PC-9 (cell line): ENCODE measurements at regions of chr14 and their contacts with region 1.

Region 1: DNA sequence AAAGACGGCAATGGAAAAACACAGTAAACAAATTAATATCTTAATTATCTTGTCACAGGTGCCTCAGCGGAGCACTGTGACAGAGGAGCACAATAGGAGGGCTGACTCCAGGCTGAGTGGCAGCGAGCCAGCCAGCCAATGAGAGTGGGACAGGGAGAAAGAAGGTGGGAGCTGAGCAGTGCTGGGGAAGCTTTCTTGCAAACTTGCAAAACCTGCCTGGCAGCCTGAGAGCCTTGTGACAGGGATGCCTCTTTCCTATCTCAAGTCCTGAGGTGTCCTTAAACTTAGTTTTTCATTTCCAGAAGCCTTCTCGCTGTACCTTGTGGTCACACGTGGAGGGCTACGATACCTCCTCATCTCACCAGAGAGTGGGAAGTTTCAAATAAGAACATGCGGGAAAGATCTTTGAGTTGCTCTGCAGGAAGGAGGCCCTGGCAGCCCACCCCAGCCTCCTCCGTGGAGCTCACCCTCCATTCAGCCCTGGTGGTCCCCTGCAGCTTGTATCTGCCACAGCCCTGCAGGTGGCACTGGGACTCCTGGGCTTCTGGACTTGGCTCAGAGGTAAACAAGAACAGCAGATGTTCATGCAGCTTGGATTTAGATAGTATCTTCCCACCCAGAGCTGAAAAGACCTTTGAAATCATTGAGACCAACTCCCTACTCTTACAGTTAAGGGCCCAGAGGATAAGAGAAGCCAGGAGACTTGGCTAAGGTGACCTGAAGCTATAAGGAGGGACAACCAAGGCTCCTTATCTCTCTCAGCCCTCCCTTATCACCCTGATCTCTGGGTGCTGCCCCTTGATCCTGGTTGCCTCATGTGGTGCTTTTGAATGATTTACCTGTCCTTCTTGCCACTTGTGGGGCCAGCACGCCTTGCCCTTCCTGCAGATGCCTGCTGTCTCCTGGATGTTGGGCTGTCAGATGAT is 153.5 kb upstream of the MAX start:
- DNase-seq: peak; percentile 92
- H3K4me3 ChIP-seq: peak overlapping the region; percentile 47; the same call in 1 of the 2 replicates
- H3K27ac ChIP-seq: peak overlapping the region; percentile 98
- H3K4me1 ChIP-seq: peaks cover 86% of the 10 kb centered on the region
- H3K27me3 ChIP-seq: no peaks in the 10 kb centered on the region
- CTCF ChIP-seq: peak; percentile 38; the same call in 1 of the 2 replicates

Region 2: GRCh38 chr14:64971943-64972791 is 283.6 kb before region 1 on chr14 and contains the start of gene RAB15:
- CTCF ChIA-PET with region 1: no interaction called
- POLR2A ChIA-PET with region 1: no interaction called
- intact Hi-C with region 1: no loop called
- DNase-seq: peak in 1 of 2 experiments; percentile 42
- H3K4me3 ChIP-seq: peak within 1 kb of the TSS; percentile 83
- H3K27ac ChIP-seq: peak within 1 kb of the TSS; percentile 79
- H3K4me1 ChIP-seq: peaks cover 45% of the 10 kb centered on the region
- H3K27me3 ChIP-seq: no peaks in the 10 kb centered on the region
- CTCF ChIP-seq: no peak
- total RNA-seq, gene RAB15: 52.9 and 74.9 TPM in 2 replicates

Region 3: DNA sequence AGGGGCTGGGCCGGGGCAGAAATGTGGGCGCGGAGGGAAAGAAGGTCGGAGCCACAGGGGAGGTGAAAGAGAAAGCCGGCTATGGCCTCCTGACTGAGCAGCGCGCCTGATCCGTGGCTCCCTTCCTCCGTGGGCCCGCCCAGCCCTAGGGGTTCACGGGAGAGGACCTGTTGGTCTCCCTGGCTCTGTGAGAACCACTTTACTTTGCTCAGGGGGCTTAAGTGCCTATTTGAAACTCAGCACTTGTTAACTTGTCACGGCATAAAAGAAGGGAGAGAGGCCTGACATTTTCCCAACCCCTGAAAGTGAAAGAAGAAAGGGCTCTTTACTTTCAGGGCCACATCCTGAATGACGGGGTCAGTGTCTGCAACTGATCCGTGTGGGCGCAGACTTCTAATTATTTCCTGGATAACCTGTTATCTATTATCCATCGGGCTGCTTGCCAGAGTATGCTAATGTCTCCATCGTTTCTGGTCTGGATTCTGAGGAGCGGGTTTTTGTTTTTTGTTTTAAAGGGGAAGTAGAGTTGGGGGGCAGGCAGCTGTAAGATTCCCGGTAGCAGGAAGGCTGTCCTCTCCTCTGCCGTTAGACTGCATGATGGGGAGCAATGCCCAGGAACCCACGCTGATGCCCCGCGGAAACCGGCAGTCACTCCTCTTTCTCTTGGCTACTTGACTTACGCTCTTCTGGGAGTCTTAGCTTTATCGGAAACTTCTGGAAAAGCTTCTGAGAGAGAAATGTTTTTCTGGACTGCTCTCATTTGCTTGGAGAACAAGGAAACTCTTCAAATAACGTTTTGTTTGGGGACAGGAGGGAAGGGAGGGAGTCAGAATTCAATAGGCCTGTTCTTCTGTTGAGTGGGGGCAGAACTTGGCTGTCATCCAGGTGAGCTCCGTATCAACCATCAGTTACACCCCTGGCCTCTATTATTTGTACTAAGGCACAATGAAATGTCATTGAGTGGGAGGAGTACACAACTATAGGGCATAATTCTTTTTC is 25.7 kb before region 1 on chr14:
- CTCF ChIA-PET with region 1: no interaction called
- POLR2A ChIA-PET with region 1: no interaction called
- intact Hi-C with region 1: loop called (anchors 2 kb)
- DNase-seq: peak; percentile 42 to 59
- H3K4me3 ChIP-seq: no peak overlapping the region
- H3K27ac ChIP-seq: peak overlapping the region; percentile 24
- H3K4me1 ChIP-seq: peaks cover 71% of the 10 kb centered on the region
- H3K27me3 ChIP-seq: no peaks in the 10 kb centered on the region
- CTCF ChIP-seq: no peak

Region 4: DNA sequence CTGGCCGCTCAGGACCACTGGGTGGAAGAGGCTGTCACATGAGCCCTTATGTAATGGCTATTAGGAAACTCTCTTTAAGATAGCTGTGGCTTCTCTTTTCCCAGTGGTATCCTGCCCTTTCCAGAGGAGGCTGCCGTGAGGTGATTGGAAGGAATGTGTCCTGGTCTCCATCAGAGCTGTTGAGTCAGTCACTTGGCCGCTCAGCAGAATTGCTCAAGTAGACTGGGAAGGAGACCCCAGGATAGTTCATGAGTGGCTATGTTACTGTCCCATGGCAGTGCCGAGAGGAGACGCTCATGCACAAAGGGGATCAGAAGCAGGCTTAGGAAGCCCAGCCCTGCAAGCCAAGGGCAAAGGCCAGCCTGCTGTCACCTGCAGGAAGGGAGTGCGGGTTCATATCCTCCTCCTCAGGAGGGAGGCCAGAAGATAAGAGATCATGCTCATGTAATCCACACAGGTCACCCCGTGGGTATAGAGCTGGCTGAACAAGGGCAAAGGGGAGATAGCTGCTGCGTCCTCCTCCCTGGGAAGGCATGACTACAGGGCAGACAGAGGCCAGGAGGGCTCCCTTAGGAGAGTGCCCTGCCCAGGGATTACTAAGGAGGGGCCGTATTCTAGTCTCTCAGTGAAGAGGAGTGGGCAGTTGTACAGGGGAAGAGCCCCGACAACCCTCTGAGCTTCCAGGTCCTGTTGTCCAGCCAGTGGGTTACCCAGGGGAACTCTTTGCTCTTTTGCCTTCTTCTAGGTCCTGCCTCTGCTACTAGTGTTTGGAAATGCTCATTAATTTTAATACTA is 16.5 kb before region 1 on chr14:
- CTCF ChIA-PET with region 1: interaction called, 8 read pairs
- POLR2A ChIA-PET with region 1: interaction called, 5 read pairs
- intact Hi-C with region 1: loop called (anchors 1 kb)
- DNase-seq: peak; percentile 68 to 91
- H3K4me3 ChIP-seq: peak overlapping the region; percentile 44; the same call in 1 of the 2 replicates
- H3K27ac ChIP-seq: peak overlapping the region; percentile 96
- H3K4me1 ChIP-seq: peaks cover 90% of the 10 kb centered on the region
- H3K27me3 ChIP-seq: no peaks in the 10 kb centered on the region
- CTCF ChIP-seq: no peak

Region 5: DNA sequence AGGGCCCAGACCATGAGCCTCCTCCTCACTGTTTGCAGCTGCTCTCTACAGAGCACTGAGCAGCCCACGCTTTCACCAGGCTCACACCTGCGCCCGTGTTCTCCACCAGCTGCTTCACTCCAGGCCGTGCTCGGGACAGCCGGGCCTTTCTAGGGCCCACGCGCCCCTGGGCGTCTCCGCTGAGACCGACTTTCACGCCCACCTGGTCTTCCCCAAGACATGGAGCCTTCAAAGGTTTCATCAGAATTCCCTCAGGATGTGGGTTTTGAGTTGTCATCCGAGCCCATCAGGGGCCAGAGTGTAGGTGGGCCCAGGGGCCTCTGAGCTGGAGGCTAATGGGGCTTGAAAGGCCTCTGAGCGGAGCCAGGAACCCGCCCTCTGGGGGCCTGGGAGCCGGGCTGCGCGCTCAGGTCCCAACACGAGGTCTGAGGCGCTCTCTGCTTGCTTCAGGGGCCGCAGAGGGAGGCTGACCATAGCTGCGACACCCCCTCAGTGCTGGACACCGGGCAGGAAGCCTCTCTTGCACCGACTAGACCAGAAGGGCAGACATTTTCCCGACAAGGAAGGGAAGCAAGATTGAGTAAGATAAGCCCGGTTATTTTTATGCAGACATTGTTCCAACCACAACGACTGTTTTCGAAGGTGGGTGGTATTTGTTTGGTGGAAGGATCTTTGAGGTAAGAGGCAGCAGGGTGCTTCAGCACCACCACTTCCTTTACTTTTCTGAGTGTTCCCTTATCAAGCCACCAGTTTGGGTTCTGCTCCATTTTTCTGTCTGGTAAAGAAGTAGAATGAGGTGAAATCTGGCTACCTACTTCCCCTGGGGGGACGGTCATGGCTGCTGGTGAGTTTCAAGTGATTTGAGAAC is 31.7 kb after region 1 on chr14:
- CTCF ChIA-PET with region 1: no interaction called
- POLR2A ChIA-PET with region 1: no interaction called
- intact Hi-C with region 1: loop called (anchors 2 kb)
- DNase-seq: no peak
- H3K4me3 ChIP-seq: no peak overlapping the region
- H3K27ac ChIP-seq: no peak overlapping the region
- H3K4me1 ChIP-seq: peaks cover 29% of the 10 kb centered on the region
- H3K27me3 ChIP-seq: no peaks in the 10 kb centered on the region
- CTCF ChIP-seq: no peak

Region 6: DNA sequence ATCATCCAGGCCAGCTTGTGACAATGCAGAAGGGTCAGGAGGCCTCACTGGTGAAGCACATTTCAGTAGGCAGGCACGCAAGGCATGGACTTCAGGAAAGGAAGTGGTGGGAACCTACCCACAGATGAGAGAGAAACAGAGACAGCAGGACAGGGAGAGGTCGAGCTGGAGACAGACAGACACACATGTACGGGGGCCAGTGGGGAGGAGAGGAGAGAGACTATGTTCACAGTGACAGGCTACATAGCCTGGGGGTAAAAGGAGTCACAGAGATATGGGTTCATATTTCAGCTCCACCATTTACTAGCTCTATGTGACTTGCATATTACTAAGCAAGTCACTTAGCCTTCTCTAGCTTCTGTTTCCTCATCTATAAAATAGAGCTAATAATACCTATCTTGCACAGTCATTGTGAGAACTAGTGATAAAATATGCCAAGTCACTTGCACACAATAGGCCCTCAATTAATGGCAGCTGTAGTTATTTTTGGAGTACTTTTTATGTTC is 65.6 kb after region 1 on chr14:
- CTCF ChIA-PET with region 1: no interaction called
- POLR2A ChIA-PET with region 1: interaction called, 16 read pairs
- intact Hi-C with region 1: no loop called
- DNase-seq: peak; percentile 62 to 98
- H3K4me3 ChIP-seq: no peak overlapping the region
- H3K27ac ChIP-seq: peak overlapping the region; percentile 99
- H3K4me1 ChIP-seq: peaks cover 66% of the 10 kb centered on the region
- H3K27me3 ChIP-seq: no peaks in the 10 kb centered on the region
- CTCF ChIP-seq: no peak